ENCODE measurements at regions of chr2 and their contacts with region 1.

Region 1: GRCh38 chr2:216412022-216412999 is at the start of gene SMARCAL1:
- DNase-seq: peak; percentile 98 to 100 (median 99)
- H3K4me3 ChIP-seq: peak within 1 kb of the TSS; percentile 56 to 98 (median 84)
- H3K27ac ChIP-seq: peak within 1 kb of the TSS; percentile 77 to 100 (median 98)
- H3K27me3 ChIP-seq: peaks cover 0 to 3% (median 0%) of the 10 kb centered on the region in 45 donors
- CTCF ChIP-seq: peak in 15 of 56 donors; percentile 5 to 45 (median 25)
- total RNA-seq, gene SMARCAL1: 15.9 to 35.4 (median 24.8) TPM

Region 2: GRCh38 chr2:216114714-216115557 is 297.4 kb before region 1 on chr2:
- intact Hi-C with region 1: loop called (anchors 5 kb)
- DNase-seq: peak; percentile 87 to 96 (median 93)
- H3K4me3 ChIP-seq: peak overlapping the region; percentile 37 to 80 (median 66)
- H3K27ac ChIP-seq: peak overlapping the region; percentile 66 to 99 (median 94)
- H3K27me3 ChIP-seq: no peaks in the 10 kb centered on the region
- CTCF ChIP-seq: peak; percentile 81 to 98 (median 92)

Region 3: DNA sequence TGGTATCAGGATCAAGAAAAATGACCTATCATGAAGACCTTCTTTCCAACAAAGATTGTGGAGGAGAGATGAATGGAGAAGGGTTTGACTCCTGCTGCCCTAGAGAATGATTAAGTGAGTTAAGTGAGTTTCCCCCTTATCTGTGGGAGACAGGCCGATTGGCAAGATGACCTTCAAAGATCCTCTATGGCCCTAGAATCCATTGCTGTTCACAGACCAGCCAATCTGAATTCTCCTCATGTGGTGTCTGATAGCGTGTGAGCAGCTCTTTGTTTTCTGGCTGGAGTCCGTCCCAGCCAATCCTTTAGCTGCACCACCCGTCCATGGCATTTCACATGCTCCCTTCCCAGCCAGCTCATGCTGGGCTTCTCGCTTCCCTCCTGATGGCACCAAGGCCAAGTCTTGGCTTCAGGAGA is 119.4 kb before region 1 on chr2:
- intact Hi-C with region 1: loop called in 1 of 2 experiments (anchors 5 kb)
- DNase-seq: peak in 7 of 10 donors; percentile 25 to 82 (median 42)
- H3K4me3 ChIP-seq: no peak overlapping the region
- H3K27ac ChIP-seq: no peak overlapping the region
- H3K27me3 ChIP-seq: no peaks in the 10 kb centered on the region
- CTCF ChIP-seq: no peak

Region 4: DNA sequence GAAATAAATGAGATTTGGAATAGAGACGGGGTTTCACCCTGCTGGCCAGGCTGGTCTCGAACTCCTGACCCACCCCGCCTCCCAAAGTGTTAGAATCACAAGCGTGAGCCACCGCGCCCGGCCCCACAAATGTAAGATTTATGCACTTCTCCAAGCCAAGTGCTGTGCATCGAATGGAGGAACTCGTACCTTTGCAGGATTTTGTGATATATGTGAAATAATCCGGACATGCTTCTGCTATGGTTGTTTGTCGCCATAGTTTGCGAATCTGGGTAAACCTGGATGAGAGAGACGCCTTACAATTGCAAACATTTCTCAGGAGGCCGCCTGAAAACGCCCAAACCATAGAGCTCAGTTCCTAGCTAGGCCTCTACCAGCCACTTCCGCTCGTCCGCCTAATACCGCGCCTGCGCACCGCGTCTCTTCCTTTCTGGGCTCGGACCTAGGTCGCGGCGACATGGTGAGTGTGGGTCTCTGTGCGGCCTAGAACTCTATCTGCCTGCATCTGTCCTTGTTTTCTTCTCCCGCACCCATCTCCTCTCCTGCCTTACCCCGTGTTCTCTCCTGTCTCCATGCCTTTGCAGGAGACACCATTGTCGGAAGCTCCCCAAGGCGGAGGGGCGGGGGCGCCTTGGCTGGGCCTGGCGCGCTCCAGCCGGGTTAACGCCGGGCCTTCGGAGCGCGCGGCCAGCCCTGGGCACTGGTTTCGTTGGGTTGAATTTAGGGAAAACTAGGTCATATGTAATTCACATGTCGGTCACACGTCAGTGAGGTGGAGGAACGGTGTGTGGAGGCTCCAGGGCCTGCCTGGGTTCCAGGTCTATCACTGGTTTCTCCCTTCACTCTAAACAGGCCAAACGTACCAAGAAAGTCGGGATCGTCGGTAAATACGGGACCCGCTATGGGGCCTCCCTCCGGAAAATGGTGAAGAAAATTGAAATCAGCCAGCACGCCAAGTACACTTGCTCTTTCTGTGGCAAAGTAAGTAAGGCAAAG is 86.4 kb after region 1 on chr2 and contains the start of gene RPL37A:
- intact Hi-C with region 1: loop called (anchors 2 to 5 kb)
- DNase-seq: peak; percentile 90 to 96 (median 94)
- H3K4me3 ChIP-seq: peak within 1 kb of the TSS; percentile 53 to 96 (median 81)
- H3K27ac ChIP-seq: peak within 1 kb of the TSS; percentile 40 to 95 (median 87)
- H3K27me3 ChIP-seq: no peaks in the 10 kb centered on the region
- CTCF ChIP-seq: peak in 34 of 56 donors; percentile 6 to 53 (median 26)
- total RNA-seq, gene RPL37A: 791 to 1,871 (median 1,178) TPM